Activated naive CD4-positive, alpha-beta T cell treated with anti-CD3 and anti-CD28 coated beads for 36 hours (primary cell): ENCODE measurements at regions of chr7 and their contacts with region 1.

Region 1: GRCh38 chr7:876167-876967 is at the start of gene GET4:
- DNase-seq: peak; percentile 97
- H3K4me3 Mint-ChIP-seq: peak within 1 kb of the TSS; percentile 96
- H3K27ac Mint-ChIP-seq: peak within 1 kb of the TSS; percentile 82
- H3K4me1 Mint-ChIP-seq: peaks cover 41% of the 10 kb centered on the region
- H3K27me3 Mint-ChIP-seq: no peaks in the 10 kb centered on the region
- total RNA-seq, gene GET4: 19.3 to 20.2 TPM

Region 2: GRCh38 chr7:322111-322671 is 554.2 kb before region 1 on chr7:
- CTCF ChIA-PET with region 1: interaction called, 5 read pairs
- intact Hi-C with region 1: loop called (anchors 2 kb)
- DNase-seq: peak; percentile 83
- H3K4me3 Mint-ChIP-seq: no peak overlapping the region
- H3K27ac Mint-ChIP-seq: no peak overlapping the region
- H3K4me1 Mint-ChIP-seq: no peaks in the 10 kb centered on the region
- H3K27me3 Mint-ChIP-seq: peaks cover 21% of the 10 kb centered on the region

Region 3: GRCh38 chr7:786472-787255 is 89.7 kb before region 1 on chr7:
- CTCF ChIA-PET with region 1: interaction called, 13 read pairs
- intact Hi-C with region 1: loop called (anchors 1 kb)
- DNase-seq: peak; percentile 84
- H3K4me3 Mint-ChIP-seq: no peak overlapping the region
- H3K27ac Mint-ChIP-seq: no peak overlapping the region
- H3K4me1 Mint-ChIP-seq: no peaks in the 10 kb centered on the region
- H3K27me3 Mint-ChIP-seq: no peaks in the 10 kb centered on the region

Region 4: GRCh38 chr7:831596-832166 is 44.7 kb before region 1 on chr7:
- CTCF ChIA-PET with region 1: interaction called, 4 read pairs
- intact Hi-C with region 1: loop called (anchors 1 kb)
- DNase-seq: peak; percentile 53
- H3K4me3 Mint-ChIP-seq: peak overlapping the region; percentile 73
- H3K27ac Mint-ChIP-seq: peak overlapping the region; percentile 99
- H3K4me1 Mint-ChIP-seq: peaks cover 68% of the 10 kb centered on the region
- H3K27me3 Mint-ChIP-seq: no peaks in the 10 kb centered on the region

Region 5: DNA sequence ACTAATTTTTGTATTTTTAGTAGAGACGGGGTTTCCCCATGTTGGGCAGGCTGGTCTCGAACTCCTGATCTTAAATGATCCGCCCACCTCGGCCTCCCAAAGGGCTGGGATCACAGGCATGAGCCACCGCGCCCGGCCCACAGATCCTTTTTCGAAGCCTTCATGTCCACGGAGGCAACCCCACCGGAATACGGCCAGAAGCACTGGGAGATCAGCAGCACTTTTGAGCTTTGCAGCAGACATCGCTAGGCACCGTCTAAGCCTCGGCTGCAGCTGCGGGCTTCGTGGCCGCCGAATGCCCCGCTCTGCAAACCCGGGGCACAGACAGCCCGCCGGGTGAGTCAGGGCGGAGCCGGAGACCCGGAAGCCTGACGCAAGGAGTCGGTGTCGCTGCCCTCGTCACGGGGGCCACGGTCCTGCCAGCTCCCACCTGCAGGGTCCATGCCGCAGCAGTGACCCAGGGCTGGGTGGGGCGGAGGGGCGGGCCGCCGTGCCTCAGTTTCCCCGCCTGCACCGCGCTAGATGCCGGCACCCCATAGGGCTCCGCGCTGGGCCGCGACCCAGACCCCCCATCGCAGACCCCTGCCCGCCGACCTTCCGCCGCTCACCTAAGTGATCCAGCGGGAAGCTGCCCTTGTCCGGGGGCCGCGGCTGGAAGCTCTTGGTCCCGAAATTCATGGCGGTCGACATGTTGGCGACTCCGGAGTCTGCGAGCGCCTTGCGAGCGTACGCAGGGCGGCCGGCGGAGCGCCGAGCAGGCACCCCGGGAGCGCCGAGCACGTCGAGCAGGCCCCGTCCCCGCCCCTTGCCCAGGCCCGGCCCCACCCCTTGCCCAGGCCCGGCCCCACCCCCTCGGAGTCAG is 98.7 kb after region 1 on chr7 and contains the start of gene COX19:
- CTCF ChIA-PET with region 1: no interaction called
- intact Hi-C with region 1: loop called (anchors 1 kb)
- DNase-seq: peak; percentile 91
- H3K4me3 Mint-ChIP-seq: peak within 1 kb of the TSS; percentile 92
- H3K27ac Mint-ChIP-seq: peak within 1 kb of the TSS; percentile 91
- H3K4me1 Mint-ChIP-seq: peaks cover 33% of the 10 kb centered on the region
- H3K27me3 Mint-ChIP-seq: no peaks in the 10 kb centered on the region
- total RNA-seq, gene COX19: 12.6 to 15.2 TPM

Region 6: DNA sequence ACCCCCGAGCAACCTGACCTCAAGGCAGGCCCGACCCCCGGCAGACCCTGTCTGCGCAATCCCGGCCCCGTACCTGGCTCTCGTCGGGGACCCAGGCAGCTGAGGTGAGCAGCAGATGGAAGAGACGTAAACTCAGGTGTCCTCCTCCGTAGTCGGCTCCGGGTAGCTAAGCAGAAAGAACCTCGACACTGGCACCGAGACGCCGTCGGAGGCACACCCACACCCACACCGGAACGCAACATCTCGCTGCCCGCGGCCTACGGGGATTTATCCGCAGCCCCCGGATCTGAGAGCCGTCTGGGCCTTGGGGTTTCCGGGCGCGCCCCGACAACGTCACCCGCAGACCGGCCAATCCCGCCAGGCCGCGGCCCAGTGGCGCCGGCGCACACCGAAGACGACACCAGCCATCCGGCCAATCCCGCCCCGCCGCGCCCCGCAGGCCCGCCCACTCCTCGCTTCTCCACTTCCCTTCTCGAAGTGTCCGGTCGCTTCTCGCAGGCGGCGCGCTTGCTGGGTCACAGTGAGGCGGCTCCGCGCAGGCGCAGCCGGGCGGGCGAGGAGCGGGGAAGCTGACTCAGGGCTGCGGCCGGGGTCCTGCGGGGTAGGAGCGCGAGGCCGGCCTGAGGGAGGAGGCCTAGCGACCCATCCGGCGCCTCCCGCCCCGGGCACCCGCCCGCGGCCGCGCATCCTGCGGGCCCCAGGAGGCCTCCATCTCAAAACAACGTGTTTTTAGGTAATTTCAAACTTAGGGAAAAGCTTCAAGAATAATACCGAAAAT is 283.7 kb after region 1 on chr7 and contains the start of gene ZFAND2A:
- CTCF ChIA-PET with region 1: no interaction called
- intact Hi-C with region 1: loop called (anchors 5 kb)
- DNase-seq: peak; percentile 99
- H3K4me3 Mint-ChIP-seq: peak within 1 kb of the TSS; percentile 86
- H3K27ac Mint-ChIP-seq: peak within 1 kb of the TSS; percentile 78
- H3K4me1 Mint-ChIP-seq: peaks cover 29% of the 10 kb centered on the region
- H3K27me3 Mint-ChIP-seq: no peaks in the 10 kb centered on the region
- total RNA-seq, gene ZFAND2A: 19.1 to 20.7 TPM

Region 7: DNA sequence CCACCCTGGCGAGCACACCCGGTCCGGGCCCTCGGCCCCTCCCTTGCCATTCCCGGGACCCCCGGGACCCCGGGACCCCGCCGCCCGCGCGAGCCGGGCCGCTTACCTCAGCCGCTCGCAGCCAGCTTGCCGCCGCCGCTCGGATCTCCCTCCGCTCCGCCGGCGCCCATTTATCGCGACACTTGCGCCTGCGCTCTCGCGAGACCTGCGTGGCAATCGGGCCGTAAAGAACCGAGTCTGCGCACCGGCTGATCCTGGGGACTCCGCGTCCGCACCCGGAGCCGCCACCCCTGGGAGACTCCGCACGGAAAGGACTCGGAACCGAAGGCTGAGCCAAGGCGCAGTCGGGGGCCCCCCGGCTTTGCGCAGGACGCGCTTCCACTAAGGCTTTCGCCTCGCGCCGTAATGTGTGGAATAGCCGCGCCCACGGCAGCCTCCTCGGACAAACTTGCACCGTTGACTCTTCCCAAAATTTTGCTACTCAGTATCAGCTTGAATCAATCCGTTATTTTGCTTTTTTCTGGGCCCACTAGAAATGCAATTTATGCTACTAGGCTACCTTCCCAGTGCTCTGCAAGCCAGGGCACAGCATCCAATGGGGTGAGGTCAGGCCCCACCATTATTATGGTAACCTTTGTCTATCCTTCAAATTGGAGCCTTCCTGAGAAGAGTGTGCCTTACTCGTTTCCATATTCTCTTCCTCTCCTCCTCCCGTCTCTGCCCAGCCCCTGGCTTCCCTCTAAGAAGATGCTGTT is 1356.6 kb after region 1 on chr7 and contains the start of gene MAD1L1:
- CTCF ChIA-PET with region 1: no interaction called
- intact Hi-C with region 1: no loop called
- DNase-seq: peak; percentile 93
- H3K4me3 Mint-ChIP-seq: peak within 1 kb of the TSS; percentile 88
- H3K27ac Mint-ChIP-seq: peak within 1 kb of the TSS; percentile 46
- H3K4me1 Mint-ChIP-seq: peaks cover 32% of the 10 kb centered on the region
- H3K27me3 Mint-ChIP-seq: no peaks in the 10 kb centered on the region
- total RNA-seq, gene MAD1L1: 37.5 to 40.2 TPM